Breast epithelium (tissue), 4 donors: ENCODE measurements at regions of chr13 and their contacts with region 1.

Region 1: GRCh38 chr13:112325920-112326645 is 50.1 kb upstream of the SPACA7 start:
- DNase-seq: no peak
- H3K4me3 ChIP-seq: no peak overlapping the region
- H3K27ac ChIP-seq: no peak overlapping the region
- H3K4me1 ChIP-seq: no peaks in the 10 kb centered on the region
- H3K27me3 ChIP-seq: peaks cover 0 to 54% of the 10 kb centered on the region in 2 donors
- CTCF ChIP-seq: no peak
- POLR2A ChIP-seq: no peak

Region 2: DNA sequence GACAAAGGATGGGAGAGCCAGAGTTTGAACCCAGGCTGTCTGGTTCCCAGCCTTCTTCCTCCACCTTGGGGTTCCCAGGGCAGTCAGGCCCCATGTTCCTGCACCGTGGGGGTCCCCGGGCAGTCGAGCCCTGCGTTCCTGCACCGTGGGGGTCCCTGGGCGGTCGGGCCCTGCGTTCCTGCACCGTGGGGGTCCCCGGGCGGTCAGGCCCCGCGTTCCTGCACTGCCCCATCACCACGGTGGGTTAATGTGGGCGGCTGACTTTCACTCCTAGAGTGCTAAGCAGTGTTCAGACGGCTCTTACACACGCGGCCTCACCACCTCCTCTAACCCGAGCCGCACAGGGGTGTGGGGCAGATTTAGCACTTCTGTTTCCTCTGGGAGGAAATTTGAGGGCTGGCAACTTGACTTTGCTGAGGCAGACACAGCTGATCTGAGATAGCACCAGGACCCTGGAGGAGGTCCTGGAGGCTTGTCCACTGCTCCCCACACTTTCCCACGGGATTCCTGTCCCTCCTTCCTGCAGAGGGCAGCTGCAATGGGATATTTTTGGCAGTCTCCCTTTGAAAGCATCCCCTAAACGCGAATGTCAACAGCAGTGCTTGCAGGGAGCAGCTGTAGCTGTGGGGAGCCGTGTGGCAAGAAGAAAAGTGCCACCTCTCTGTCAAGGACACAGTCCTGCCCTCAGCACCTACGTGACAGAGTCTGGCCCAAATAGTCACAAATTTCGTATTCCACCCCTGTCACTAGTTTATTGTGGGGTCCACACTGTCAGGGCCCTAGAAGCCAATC is 766.3 kb before region 1 on chr13:
- intact Hi-C with region 1: loop called (anchors 10 kb)
- DNase-seq: no peak
- H3K4me3 ChIP-seq: no peak overlapping the region
- H3K27ac ChIP-seq: no peak overlapping the region
- H3K4me1 ChIP-seq: no peaks in the 10 kb centered on the region
- H3K27me3 ChIP-seq: peaks cover 0 to 27% of the 10 kb centered on the region in 2 donors
- CTCF ChIP-seq: no peak
- POLR2A ChIP-seq: no peak

Region 3: GRCh38 chr13:112346173-112346898 is 20.3 kb after region 1 on chr13:
- intact Hi-C with region 1: no loop called
- DNase-seq: no peak
- H3K4me3 ChIP-seq: no peak overlapping the region
- H3K27ac ChIP-seq: no peak overlapping the region
- H3K4me1 ChIP-seq: no peaks in the 10 kb centered on the region
- H3K27me3 ChIP-seq: peaks cover 0 to 57% of the 10 kb centered on the region in 2 donors
- CTCF ChIP-seq: no peak
- POLR2A ChIP-seq: no peak